Breast epithelium (tissue), 4 donors: ENCODE measurements at regions of chr13 and their contacts with region 1.

Region 1: GRCh38 chr13:73765651-73766384 is 368.4 kb downstream of the KLF12 start:
- DNase-seq: peak; percentile 44 to 57
- H3K4me3 ChIP-seq: peak overlapping the region in 2 of 3 donors; percentile 18 to 47
- H3K27ac ChIP-seq: peak overlapping the region; percentile 17 to 73
- H3K4me1 ChIP-seq: no peaks in the 10 kb centered on the region
- H3K27me3 ChIP-seq: no peaks in the 10 kb centered on the region
- CTCF ChIP-seq: no peak
- POLR2A ChIP-seq: no peak

Region 2: DNA sequence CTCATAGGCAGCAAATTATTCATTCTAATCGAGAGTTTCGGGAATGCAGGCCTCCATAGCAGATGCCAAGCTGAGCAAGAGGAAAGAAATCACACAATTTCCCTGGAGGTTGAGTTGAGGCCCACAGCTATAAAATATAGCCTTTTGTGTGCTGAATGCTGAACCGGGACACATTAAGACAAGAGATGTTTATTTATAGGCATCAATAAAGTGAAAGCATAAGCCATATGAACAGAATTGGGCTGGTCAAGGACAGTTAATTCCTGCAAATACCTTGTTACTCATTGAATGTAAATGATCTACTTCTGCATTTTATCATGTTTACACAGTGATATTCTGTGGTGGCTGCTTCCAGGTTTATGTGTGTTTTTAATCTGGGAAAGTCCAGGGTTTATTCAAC is 93.3 kb before region 1 on chr13:
- intact Hi-C with region 1: no loop called
- DNase-seq: no peak
- H3K4me3 ChIP-seq: no peak overlapping the region
- H3K27ac ChIP-seq: no peak overlapping the region
- H3K4me1 ChIP-seq: no peaks in the 10 kb centered on the region
- H3K27me3 ChIP-seq: no peaks in the 10 kb centered on the region
- CTCF ChIP-seq: no peak
- POLR2A ChIP-seq: no peak

Region 3: GRCh38 chr13:75364131-75364713 is 1598.4 kb after region 1 on chr13:
- intact Hi-C with region 1: loop called (anchors 5 kb)
- DNase-seq: no peak
- H3K4me3 ChIP-seq: no peak overlapping the region
- H3K27ac ChIP-seq: no peak overlapping the region
- H3K4me1 ChIP-seq: no peaks in the 10 kb centered on the region
- H3K27me3 ChIP-seq: no peaks in the 10 kb centered on the region
- CTCF ChIP-seq: no peak
- POLR2A ChIP-seq: no peak